ENCODE measurements at regions of chr6 and their contacts with region 1.

Region 1: DNA sequence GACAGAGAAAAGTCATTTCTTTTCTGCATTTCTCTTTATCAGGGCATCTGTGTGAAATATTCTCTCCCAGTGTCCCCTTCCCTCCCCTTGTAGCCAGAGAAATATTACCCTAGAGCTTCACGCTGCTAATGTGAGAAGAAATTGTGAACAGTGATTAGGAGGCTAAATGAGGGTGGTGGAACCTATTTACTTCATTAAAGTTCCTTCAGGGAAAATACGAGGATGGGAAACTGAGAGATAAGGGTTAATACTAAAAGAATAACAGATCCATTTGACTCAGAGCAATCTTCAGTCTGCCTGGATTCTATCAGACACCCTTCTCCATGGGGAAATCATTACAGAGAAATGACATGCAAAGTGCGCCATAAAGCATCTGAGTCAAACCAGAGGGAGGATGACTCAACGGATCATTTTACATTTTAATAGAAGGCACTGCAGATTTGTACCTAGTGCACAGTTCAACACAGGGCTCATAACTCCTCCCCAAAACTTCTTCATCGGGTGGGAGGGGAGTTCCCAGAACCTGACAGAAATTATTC is 131.3 kb downstream of the GJA10 start:
- DNase-seq: peak; percentile 77
- ATAC-seq: peak; percentile 93
- H3K4me3 Mint-ChIP-seq: peak overlapping the region; percentile 22
- H3K27ac Mint-ChIP-seq: peak overlapping the region; percentile 90
- H3K4me1 Mint-ChIP-seq: peaks cover 88% of the 10 kb centered on the region
- H3K27me3 Mint-ChIP-seq: no peaks in the 10 kb centered on the region

Region 2: GRCh38 chr6:89630488-89630887 is 395.1 kb before region 1 on chr6:
- CTCF ChIA-PET with region 1: no interaction called
- POLR2A ChIA-PET with region 1: no interaction called
- intact Hi-C with region 1: no loop called
- DNase-seq: no peak
- ATAC-seq: no peak
- H3K4me3 Mint-ChIP-seq: no peak overlapping the region
- H3K27ac Mint-ChIP-seq: no peak overlapping the region
- H3K4me1 Mint-ChIP-seq: no peaks in the 10 kb centered on the region
- H3K27me3 Mint-ChIP-seq: no peaks in the 10 kb centered on the region

Region 3: GRCh38 chr6:90000864-90001731 is 24.5 kb before region 1 on chr6:
- CTCF ChIA-PET with region 1: interaction called, 3 read pairs
- POLR2A ChIA-PET with region 1: no interaction called
- intact Hi-C with region 1: loop called in 1 of 2 experiments (anchors 1 kb)
- DNase-seq: peak; percentile 80
- ATAC-seq: peak; percentile 79
- H3K4me3 Mint-ChIP-seq: no peak overlapping the region
- H3K27ac Mint-ChIP-seq: no peak overlapping the region
- H3K4me1 Mint-ChIP-seq: peaks cover 35% of the 10 kb centered on the region
- H3K27me3 Mint-ChIP-seq: no peaks in the 10 kb centered on the region

Region 4: GRCh38 chr6:90008908-90009501 is 16.6 kb before region 1 on chr6:
- CTCF ChIA-PET with region 1: interaction called, 9 read pairs
- POLR2A ChIA-PET with region 1: no interaction called
- intact Hi-C with region 1: loop called (anchors 1 kb)
- DNase-seq: peak; percentile 54
- ATAC-seq: peak; percentile 82
- H3K4me3 Mint-ChIP-seq: peak overlapping the region; percentile 18
- H3K27ac Mint-ChIP-seq: peak overlapping the region; percentile 95
- H3K4me1 Mint-ChIP-seq: peaks cover 68% of the 10 kb centered on the region
- H3K27me3 Mint-ChIP-seq: no peaks in the 10 kb centered on the region